RWPE1 (cell line): ENCODE measurements at regions of chr22 and their contacts with region 1.

Region 1: DNA sequence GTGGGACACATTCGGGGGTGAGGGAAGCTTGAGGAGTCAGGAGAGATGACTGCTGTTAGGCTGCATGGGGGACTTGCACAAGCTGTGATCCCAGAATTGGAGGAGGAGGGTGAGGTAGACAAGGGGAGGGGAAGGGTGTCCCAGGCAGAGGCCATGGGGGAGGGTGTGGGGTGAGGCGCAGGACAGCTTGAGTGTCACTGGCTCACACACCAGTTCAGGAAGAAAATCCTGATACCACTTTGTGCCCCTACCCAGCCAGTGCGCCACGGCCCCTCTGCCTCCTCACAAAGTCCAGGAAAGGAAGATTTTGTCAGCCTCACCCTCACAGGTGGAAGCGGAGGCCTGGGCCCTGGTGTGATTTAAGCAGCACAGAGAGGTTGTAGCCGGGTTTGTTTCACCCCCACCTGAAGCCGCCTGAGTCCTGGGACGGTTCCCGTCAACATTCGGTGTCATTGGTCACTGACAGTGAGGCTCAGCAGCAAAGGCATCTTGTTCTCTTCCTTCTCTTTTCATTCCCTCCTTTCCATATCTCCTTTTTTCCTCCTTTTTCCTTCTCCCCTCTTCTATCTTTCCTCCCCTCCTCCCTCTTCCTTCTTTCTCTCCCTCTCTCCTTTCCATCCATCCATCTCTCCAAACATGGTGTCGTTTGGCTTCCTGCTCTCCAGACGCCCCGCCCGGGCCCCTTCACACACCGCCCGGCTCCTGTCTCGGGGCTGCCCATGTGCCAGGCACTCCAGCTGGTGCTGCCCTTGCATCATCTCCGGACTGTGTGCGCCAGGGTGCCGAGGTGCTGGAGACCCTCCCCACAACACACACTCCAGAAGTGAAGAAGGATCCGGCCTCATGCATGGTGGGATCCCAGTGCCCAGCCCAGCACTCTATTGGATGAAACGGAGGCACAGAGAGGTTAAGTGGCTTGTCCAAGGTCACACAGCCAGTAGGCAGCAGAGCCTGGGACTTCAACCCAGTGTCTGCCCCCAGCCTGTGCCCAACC is 89.3 kb downstream of the MPPED1 start:
- DNase-seq: no peak
- H3K27ac ChIP-seq: no peak overlapping the region
- CTCF ChIP-seq: no peak

Region 2: DNA sequence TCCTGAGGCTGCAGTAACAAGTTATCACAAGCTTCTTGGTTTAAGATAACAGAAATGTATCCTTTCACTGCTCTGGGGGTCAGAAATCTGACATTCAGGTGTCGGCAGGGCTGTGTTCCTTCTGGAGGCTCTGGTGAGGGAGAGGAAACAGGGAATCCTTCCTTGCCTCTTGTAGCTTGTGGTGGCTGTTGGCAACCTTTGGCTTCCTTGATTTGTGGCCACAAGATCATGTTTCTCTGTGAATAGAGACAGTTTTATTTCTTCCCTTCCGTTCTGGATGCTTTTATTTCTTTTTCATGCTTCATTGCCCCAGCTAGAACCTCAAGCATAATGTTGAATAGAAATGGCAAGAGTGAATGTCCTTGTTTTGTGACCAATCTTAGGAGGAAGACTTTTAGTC is 45.2 kb before region 1 on chr22:
- CTCF ChIA-PET with region 1: no interaction called
- POLR2A ChIA-PET with region 1: no interaction called
- DNase-seq: no peak
- H3K27ac ChIP-seq: no peak overlapping the region
- CTCF ChIP-seq: no peak

Region 3: GRCh38 chr22:44855855-44856254 is 1354.8 kb after region 1 on chr22:
- CTCF ChIA-PET with region 1: interaction called, 10 read pairs
- POLR2A ChIA-PET with region 1: no interaction called
- DNase-seq: no peak
- H3K27ac ChIP-seq: no peak overlapping the region
- CTCF ChIP-seq: no peak